ENCODE measurements at regions of chr13 and their contacts with region 1.

Region 1: DNA sequence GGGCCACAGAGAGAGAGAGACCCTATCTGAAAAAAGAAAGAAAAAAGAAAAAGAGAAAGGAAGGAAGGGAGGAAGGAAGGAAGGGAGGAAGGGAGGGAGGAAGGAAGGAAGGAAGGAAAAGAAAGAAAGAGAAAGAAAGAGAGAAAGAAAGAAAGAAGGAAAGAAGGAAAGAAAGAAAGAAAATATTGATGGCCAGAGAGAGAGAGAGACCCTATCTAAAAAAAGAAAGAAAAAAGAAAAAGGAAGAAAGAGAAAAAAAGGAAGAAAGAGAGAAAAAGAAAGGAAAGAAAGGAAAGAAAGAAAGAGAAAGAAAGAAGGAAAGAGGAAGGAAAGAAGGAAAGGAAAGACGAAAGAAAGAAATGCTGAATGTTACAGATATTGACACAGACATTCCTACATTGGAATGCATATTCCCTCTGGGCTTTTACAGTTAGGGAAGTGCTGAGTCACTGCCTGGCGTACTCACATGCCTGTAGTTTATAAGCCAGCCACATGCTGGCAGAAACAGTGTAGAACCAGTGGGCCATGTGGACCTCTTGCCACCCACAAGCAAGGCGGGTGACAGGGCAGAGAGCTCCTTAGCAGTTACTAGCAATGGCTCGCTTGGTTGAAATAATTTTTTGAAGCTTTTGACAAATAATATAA is 34.6 kb upstream of the SLC46A3 start:
- DNase-seq: peak; percentile 91
- ATAC-seq: peak; percentile 99
- H3K4me3 ChIP-seq: no peak overlapping the region
- H3K27ac ChIP-seq: peak overlapping the region; percentile 84; the same call in 1 of the 2 replicates
- H3K4me1 ChIP-seq: peaks cover 6% of the 10 kb centered on the region
- H3K27me3 ChIP-seq: no peaks in the 10 kb centered on the region
- CTCF ChIP-seq: 0 out of 2 replicates have a peak, but pooled peaks have one; percentile 13
- POLR2A ChIP-seq: no peak
- RAD21 ChIP-seq: peak; percentile 22; the same call in 1 of the 2 replicates

Region 2: GRCh38 chr13:27353166-27353583 is 1400.2 kb before region 1 on chr13:
- CTCF ChIA-PET with region 1: no interaction called
- POLR2A ChIA-PET with region 1: no interaction called
- dilution Hi-C with region 1: no loop called
- in situ Hi-C with region 1: no loop called
- intact Hi-C with region 1: no loop called
- DNase-seq: peak; percentile 88
- ATAC-seq: peak; percentile 84
- H3K4me3 ChIP-seq: peak overlapping the region; percentile 27
- H3K27ac ChIP-seq: peak overlapping the region; percentile 94
- H3K4me1 ChIP-seq: peaks cover 28% of the 10 kb centered on the region
- H3K27me3 ChIP-seq: no peaks in the 10 kb centered on the region
- CTCF ChIP-seq: no peak
- POLR2A ChIP-seq: no peak
- RAD21 ChIP-seq: peak; percentile 9; the same call in 1 of the 2 replicates

Region 3: GRCh38 chr13:28658796-28659620 is 94.4 kb before region 1 on chr13 and contains the start of gene POMP:
- CTCF ChIA-PET with region 1: no interaction called
- POLR2A ChIA-PET with region 1: no interaction called
- dilution Hi-C with region 1: no loop called
- in situ Hi-C with region 1: no loop called
- intact Hi-C with region 1: no loop called
- DNase-seq: peak; percentile 95
- ATAC-seq: peak; percentile 80
- H3K4me3 ChIP-seq: peak within 1 kb of the TSS; percentile 93
- H3K27ac ChIP-seq: peak within 1 kb of the TSS; percentile 90
- H3K4me1 ChIP-seq: peaks cover 8% of the 10 kb centered on the region
- H3K27me3 ChIP-seq: no peaks in the 10 kb centered on the region
- CTCF ChIP-seq: no peak
- POLR2A ChIP-seq: peak; percentile 97
- RAD21 ChIP-seq: peak; percentile 25; the same call in 1 of the 2 replicates
- total RNA-seq, gene POMP: 60.2 and 117 TPM in 2 replicates

Region 4: GRCh38 chr13:28718543-28719226 is 34.7 kb before region 1 on chr13 and contains the start of gene SLC46A3:
- CTCF ChIA-PET with region 1: no interaction called
- POLR2A ChIA-PET with region 1: no interaction called
- dilution Hi-C with region 1: no loop called
- in situ Hi-C with region 1: no loop called
- intact Hi-C with region 1: loop called (anchors 5 kb)
- DNase-seq: peak; percentile 98
- ATAC-seq: peak; percentile 99
- H3K4me3 ChIP-seq: peak within 1 kb of the TSS; percentile 63
- H3K27ac ChIP-seq: peak within 1 kb of the TSS; percentile 44
- H3K4me1 ChIP-seq: peaks cover 12% of the 10 kb centered on the region
- H3K27me3 ChIP-seq: no peaks in the 10 kb centered on the region
- CTCF ChIP-seq: peak; percentile 20; the same call in 1 of the 2 replicates
- POLR2A ChIP-seq: peak; percentile 61; the same call in 1 of the 2 replicates
- RAD21 ChIP-seq: no peak
- total RNA-seq, gene SLC46A3: 0.54 and 0.83 TPM in 2 replicates